Naive thymus-derived CD4-positive, alpha-beta T cell (primary cell): ENCODE measurements at regions of chr11 and their contacts with region 1.

Region 1: GRCh38 chr11:72040726-72041441 is 39.5 kb downstream of the NUMA1 start:
- DNase-seq: peak; percentile 51 to 91 (median 86)
- ATAC-seq: peak; percentile 84
- H3K4me3 ChIP-seq: peak overlapping the region; percentile 89
- H3K4me3 Mint-ChIP-seq: no peak overlapping the region
- H3K27ac ChIP-seq: peak overlapping the region; percentile 88
- H3K27ac Mint-ChIP-seq: no peak overlapping the region
- H3K4me1 ChIP-seq: peaks cover 48 to 57% of the 10 kb centered on the region in 2 donors
- H3K4me1 Mint-ChIP-seq: peaks cover 19 to 53% (median 41%) of the 10 kb centered on the region in 7 donors
- H3K27me3 ChIP-seq: no peaks in the 10 kb centered on the region
- H3K27me3 Mint-ChIP-seq: no peaks in the 10 kb centered on the region

Region 2: GRCh38 chr11:71787098-71787823 is 253.6 kb before region 1 on chr11:
- CTCF ChIA-PET with region 1: no interaction called
- POLR2A ChIA-PET with region 1: no interaction called
- intact Hi-C with region 1: loop called in 1 of 2 experiments (anchors 1 kb)
- DNase-seq: peak; percentile 86 to 96 (median 94)
- ATAC-seq: peak; percentile 98
- H3K4me3 ChIP-seq: peak overlapping the region; percentile 86
- H3K4me3 Mint-ChIP-seq: peak overlapping the region; percentile 95 to 100 (median 98)
- H3K27ac ChIP-seq: peak overlapping the region; percentile 93
- H3K27ac Mint-ChIP-seq: peak overlapping the region; percentile 88 to 99 (median 98)
- H3K4me1 ChIP-seq: no peaks in the 10 kb centered on the region
- H3K4me1 Mint-ChIP-seq: peaks cover 0 to 20% (median 12%) of the 10 kb centered on the region in 7 donors
- H3K27me3 ChIP-seq: no peaks in the 10 kb centered on the region
- H3K27me3 Mint-ChIP-seq: peaks cover 0 to 5% (median 0%) of the 10 kb centered on the region in 5 donors

Region 3: GRCh38 chr11:71998662-71999310 is 42.1 kb before region 1 on chr11 and contains the start of gene IL18BP:
- CTCF ChIA-PET with region 1: no interaction called
- POLR2A ChIA-PET with region 1: interaction called, 11 read pairs
- intact Hi-C with region 1: no loop called
- DNase-seq: peak in 6 of 9 donors; percentile 31 to 51 (median 40)
- ATAC-seq: peak; percentile 80
- H3K4me3 ChIP-seq: peak within 1 kb of the TSS; percentile 68
- H3K4me3 Mint-ChIP-seq: peak within 1 kb of the TSS; percentile 88 to 99 (median 91)
- H3K27ac ChIP-seq: peak within 1 kb of the TSS; percentile 64
- H3K27ac Mint-ChIP-seq: peak within 1 kb of the TSS; percentile 93 to 99 (median 97)
- H3K4me1 ChIP-seq: peaks cover 14 to 19% of the 10 kb centered on the region in 2 donors
- H3K4me1 Mint-ChIP-seq: peaks cover 22 to 40% (median 36%) of the 10 kb centered on the region in 7 donors
- H3K27me3 ChIP-seq: no peaks in the 10 kb centered on the region
- H3K27me3 Mint-ChIP-seq: no peaks in the 10 kb centered on the region
- total RNA-seq, gene IL18BP: 17.6 to 30.2 (median 23.1) TPM

Region 4: GRCh38 chr11:72030472-72031045 is 10.3 kb before region 1 on chr11:
- CTCF ChIA-PET with region 1: interaction called, 71 read pairs
- POLR2A ChIA-PET with region 1: interaction called, 190 read pairs
- intact Hi-C with region 1: loop called (anchors 1 to 2 kb)
- DNase-seq: no peak
- ATAC-seq: no peak
- H3K4me3 ChIP-seq: no peak overlapping the region
- H3K4me3 Mint-ChIP-seq: peak overlapping the region in 8 of 10 donors; percentile 18 to 57 (median 34)
- H3K27ac ChIP-seq: peak overlapping the region; percentile 65
- H3K27ac Mint-ChIP-seq: peak overlapping the region in 8 of 9 donors; percentile 45 to 92 (median 70)
- H3K4me1 ChIP-seq: peaks cover 9 to 28% of the 10 kb centered on the region in 2 donors
- H3K4me1 Mint-ChIP-seq: peaks cover 25 to 80% (median 72%) of the 10 kb centered on the region in 7 donors
- H3K27me3 ChIP-seq: no peaks in the 10 kb centered on the region
- H3K27me3 Mint-ChIP-seq: no peaks in the 10 kb centered on the region

Region 5: DNA sequence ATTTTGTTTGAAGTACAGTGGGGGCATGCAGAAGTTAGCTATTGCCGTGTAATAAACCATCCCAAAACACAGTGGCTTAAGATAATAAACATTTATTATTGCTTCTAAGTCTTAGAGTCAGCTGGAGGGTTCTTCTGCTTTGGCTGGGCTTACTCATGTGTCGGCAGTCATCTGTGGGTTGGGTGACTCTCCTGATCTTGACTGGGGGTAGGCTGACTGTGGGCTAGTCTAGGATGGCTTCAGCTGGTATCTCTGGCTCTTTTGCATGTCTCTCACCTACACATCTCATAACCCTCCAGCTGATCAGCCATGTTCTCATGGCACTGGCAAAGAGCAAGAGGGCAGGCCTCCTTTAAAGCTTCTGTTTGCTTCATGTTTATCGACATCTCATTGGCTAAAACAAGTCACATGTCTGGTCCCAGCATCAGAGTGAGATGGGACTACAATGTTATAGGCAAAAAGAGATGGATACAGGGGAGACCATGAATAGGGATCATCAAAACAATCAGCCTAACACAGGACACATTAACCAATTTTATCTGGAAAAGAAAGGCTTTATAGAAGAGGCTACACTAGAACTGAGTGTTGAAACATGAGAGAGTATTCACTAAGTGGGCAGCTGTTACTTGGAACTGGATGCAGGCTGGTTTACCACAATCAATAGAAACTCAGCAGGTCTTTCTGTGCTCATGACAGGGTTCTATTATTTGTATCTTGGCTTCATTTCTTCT is 44.9 kb after region 1 on chr11:
- CTCF ChIA-PET with region 1: interaction called, 19 read pairs
- POLR2A ChIA-PET with region 1: interaction called, 56 read pairs
- intact Hi-C with region 1: loop called (anchors 1 kb)
- DNase-seq: no peak
- ATAC-seq: no peak
- H3K4me3 ChIP-seq: no peak overlapping the region
- H3K4me3 Mint-ChIP-seq: no peak overlapping the region
- H3K27ac ChIP-seq: no peak overlapping the region
- H3K27ac Mint-ChIP-seq: peak overlapping the region in 8 of 9 donors; percentile 58 to 83 (median 76)
- H3K4me1 ChIP-seq: peaks cover 0 to 9% of the 10 kb centered on the region in 2 donors
- H3K4me1 Mint-ChIP-seq: peaks cover 12 to 33% (median 24%) of the 10 kb centered on the region in 7 donors
- H3K27me3 ChIP-seq: no peaks in the 10 kb centered on the region
- H3K27me3 Mint-ChIP-seq: no peaks in the 10 kb centered on the region

Region 6: GRCh38 chr11:72102946-72103753 is 62.3 kb after region 1 on chr11 and contains the start of gene LAMTOR1:
- CTCF ChIA-PET with region 1: interaction called, 3 read pairs
- POLR2A ChIA-PET with region 1: interaction called, 55 read pairs
- intact Hi-C with region 1: loop called (anchors 1 kb)
- DNase-seq: peak; percentile 87 to 98 (median 95)
- ATAC-seq: peak; percentile 98
- H3K4me3 ChIP-seq: peak within 1 kb of the TSS; percentile 54
- H3K4me3 Mint-ChIP-seq: peak within 1 kb of the TSS; percentile 66 to 97 (median 86)
- H3K27ac ChIP-seq: peak within 1 kb of the TSS; percentile 93
- H3K27ac Mint-ChIP-seq: peak within 1 kb of the TSS; percentile 83 to 98 (median 94)
- H3K4me1 ChIP-seq: peaks cover 20% of the 10 kb centered on the region in 2 donors
- H3K4me1 Mint-ChIP-seq: peaks cover 37 to 49% (median 44%) of the 10 kb centered on the region in 7 donors
- H3K27me3 ChIP-seq: no peaks in the 10 kb centered on the region
- H3K27me3 Mint-ChIP-seq: no peaks in the 10 kb centered on the region
- total RNA-seq, gene LAMTOR1: 41.8 to 83.0 (median 69.7) TPM

Region 7: GRCh38 chr11:72144807-72145560 is 104.1 kb after region 1 on chr11:
- CTCF ChIA-PET with region 1: interaction called, 6 read pairs
- POLR2A ChIA-PET with region 1: no interaction called
- intact Hi-C with region 1: loop called in 1 of 2 experiments (anchors 1 kb)
- DNase-seq: no peak
- ATAC-seq: no peak
- H3K4me3 ChIP-seq: no peak overlapping the region
- H3K4me3 Mint-ChIP-seq: no peak overlapping the region
- H3K27ac ChIP-seq: no peak overlapping the region
- H3K27ac Mint-ChIP-seq: no peak overlapping the region
- H3K4me1 ChIP-seq: no peaks in the 10 kb centered on the region
- H3K4me1 Mint-ChIP-seq: peaks cover 0 to 18% (median 3%) of the 10 kb centered on the region in 7 donors
- H3K27me3 ChIP-seq: no peaks in the 10 kb centered on the region
- H3K27me3 Mint-ChIP-seq: peaks cover 1 to 15% (median 4%) of the 10 kb centered on the region in 5 donors

Region 8: DNA sequence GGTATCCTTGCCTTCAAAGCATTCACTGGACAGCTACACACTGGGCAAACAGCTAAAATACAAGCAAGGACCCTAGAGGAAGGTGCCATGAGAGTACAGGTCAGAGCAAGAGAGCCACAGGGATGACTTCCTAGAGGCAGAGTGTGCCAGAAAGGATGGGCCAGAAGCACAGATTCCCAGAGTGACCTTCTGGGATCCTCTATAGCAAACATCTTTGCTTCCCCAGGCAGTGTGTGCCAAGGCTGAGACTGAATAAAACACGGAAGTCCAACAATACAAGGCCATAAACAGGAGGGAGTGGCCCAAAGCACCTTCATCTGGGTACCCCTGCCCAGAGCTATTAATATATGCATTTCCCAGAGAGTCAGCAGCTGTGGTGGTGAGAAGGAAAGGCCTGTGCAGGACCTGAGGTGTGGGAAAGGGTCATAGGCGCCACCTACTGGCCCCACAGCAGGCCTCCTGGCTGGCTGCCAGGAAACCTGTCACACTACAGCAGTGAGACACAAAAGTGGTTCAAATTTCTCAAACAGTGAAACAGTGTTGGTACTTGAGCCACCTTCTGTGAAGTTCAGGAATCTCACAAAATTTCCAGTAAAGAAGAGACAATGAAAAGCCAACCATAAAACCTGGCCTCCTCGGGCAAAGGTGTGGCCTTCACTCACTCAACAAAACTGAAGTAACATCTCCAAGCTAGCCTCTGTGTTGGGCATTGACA is 373.2 kb after region 1 on chr11:
- CTCF ChIA-PET with region 1: no interaction called
- POLR2A ChIA-PET with region 1: no interaction called
- intact Hi-C with region 1: no loop called
- DNase-seq: peak; percentile 49 to 79 (median 68)
- ATAC-seq: peak; percentile 79
- H3K4me3 ChIP-seq: no peak overlapping the region
- H3K4me3 Mint-ChIP-seq: no peak overlapping the region
- H3K27ac ChIP-seq: no peak overlapping the region
- H3K27ac Mint-ChIP-seq: peak overlapping the region in 4 of 9 donors; percentile 2 to 50 (median 22)
- H3K4me1 ChIP-seq: peaks cover 0 to 2% of the 10 kb centered on the region in 2 donors
- H3K4me1 Mint-ChIP-seq: peaks cover 17 to 48% (median 39%) of the 10 kb centered on the region in 7 donors
- H3K27me3 ChIP-seq: no peaks in the 10 kb centered on the region
- H3K27me3 Mint-ChIP-seq: no peaks in the 10 kb centered on the region

Region 9: DNA sequence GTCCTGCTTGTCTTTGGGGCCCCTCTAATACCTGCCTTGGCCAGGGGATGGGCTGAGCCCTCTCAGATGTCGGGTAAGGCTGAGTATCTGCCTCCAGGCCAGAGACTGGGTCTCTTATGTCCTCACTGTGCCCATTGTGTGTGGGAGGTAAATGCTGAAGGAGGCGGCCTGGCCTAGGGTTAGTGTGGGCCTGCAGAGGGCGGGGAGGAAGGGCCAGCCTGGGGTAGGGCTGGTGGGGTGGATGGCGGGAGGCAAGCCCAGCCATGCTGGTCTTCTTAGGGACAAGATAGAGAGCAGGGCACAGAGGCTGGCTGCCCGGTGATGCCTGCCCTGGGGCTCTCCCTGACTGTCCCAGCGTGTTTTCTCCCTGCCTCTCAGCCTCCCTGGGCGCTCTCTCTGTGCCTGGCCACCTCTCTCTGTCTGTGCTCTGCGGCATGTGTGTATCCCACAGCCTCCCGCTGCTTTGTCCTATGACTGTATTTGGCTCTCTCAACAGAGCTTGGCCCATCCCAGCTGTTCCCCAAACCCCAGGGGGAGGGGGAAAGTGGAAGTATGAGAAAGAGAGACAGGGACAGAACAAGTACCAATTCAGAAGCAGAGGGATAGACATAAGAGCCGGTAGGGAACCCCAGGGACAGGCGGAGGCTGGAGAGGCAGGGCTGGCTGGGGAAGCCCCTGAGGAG is 576.3 kb after region 1 on chr11:
- CTCF ChIA-PET with region 1: no interaction called
- POLR2A ChIA-PET with region 1: no interaction called
- intact Hi-C with region 1: no loop called
- DNase-seq: no peak
- ATAC-seq: no peak
- H3K4me3 ChIP-seq: no peak overlapping the region
- H3K4me3 Mint-ChIP-seq: no peak overlapping the region
- H3K27ac ChIP-seq: no peak overlapping the region
- H3K27ac Mint-ChIP-seq: no peak overlapping the region
- H3K4me1 ChIP-seq: peaks cover 8 to 14% of the 10 kb centered on the region in 2 donors
- H3K4me1 Mint-ChIP-seq: peaks cover 15 to 26% (median 20%) of the 10 kb centered on the region in 7 donors
- H3K27me3 ChIP-seq: no peaks in the 10 kb centered on the region
- H3K27me3 Mint-ChIP-seq: peaks cover 4 to 28% (median 12%) of the 10 kb centered on the region in 5 donors